HEK293 (cell line): ENCODE measurements at regions of chr4 and their contacts with region 1.

Region 1: DNA sequence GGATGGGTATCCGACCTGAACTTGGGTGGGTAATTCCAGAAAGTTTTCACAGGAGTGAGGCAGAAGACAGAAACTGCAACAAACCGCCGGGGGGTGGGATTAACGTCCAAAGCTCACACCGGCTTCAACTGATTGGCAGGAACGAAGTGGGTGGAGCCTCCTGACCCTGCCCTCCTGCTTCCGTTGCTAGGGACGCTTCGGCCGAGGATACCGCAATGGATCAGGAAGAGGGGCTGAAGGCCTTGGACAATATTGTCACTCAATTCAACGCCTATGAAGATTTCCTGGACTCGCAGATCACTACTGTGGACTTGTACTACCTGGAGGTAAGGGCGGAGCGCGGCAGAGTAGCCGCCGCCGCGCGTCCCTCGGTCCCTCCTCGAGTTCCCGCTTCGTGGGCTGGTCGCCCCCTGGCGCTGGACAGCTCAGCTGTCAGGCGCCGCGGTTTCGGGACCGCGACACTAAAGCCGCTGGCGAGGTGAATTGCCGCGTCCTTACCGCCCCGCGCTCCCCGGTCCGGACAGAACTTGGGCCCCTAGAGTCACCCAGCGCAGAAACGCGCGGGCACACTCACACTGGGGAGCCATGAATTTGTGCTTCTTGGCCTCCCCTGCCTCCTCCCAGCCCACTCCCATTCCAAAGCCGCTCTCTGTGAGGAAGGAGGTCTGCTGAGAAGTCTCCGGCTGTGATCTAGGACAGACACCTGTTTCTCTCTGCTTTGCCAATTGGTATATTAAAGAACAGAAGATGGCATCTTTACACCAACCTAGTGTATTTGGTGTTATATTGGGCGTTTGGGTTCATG is at the start of gene CFAP299:
- H3K4me3 ChIP-seq: peak within 1 kb of the TSS; percentile 61
- H3K27ac ChIP-seq: no peak within 1 kb of the TSS
- H3K4me1 ChIP-seq: no peaks in the 10 kb centered on the region
- CTCF ChIP-seq: peak; percentile 88

Region 2: DNA sequence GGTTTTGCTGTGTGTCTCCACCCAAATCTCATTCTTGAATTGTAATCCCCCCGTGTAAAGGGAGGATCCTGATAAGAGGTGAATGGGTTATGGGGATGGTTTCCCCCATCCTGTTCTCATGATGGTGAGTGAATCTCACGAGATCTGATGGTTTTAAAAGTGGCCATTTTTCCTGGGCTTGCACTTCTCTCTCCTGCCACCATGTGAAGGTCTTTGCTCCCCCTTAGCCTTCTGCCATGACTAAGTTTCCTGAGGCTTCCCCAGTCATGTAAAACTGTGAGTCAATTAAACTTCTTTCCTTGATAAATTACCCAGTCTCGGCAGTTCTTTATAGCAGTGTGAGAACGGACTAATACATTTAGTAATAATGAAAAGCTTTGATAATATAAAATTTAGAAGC is 309.7 kb before region 1 on chr4:
- CTCF ChIA-PET with region 1: no interaction called
- POLR2A ChIA-PET with region 1: no interaction called
- H3K4me3 ChIP-seq: no peak overlapping the region
- H3K27ac ChIP-seq: no peak overlapping the region
- H3K4me1 ChIP-seq: no peaks in the 10 kb centered on the region
- CTCF ChIP-seq: no peak

Region 3: DNA sequence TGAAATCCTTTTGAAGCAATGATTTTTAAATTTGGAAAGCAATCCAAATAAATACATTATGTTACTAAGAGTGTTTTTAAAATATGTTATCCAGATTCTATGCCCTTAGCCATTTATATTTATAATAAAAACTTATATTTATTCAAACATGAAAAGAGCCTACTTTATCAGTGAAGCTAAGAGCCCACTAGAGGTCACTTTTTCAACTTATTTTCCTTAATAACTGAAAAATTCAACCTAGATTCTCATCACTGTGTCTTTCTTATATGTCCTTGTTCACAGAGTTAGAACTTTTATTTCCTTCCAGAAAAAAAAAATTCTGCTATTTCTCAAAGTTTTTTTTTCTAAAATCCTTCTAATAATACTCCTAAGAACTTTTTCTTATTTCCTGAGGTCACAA is 114.6 kb before region 1 on chr4:
- CTCF ChIA-PET with region 1: interaction called, 10 read pairs
- POLR2A ChIA-PET with region 1: no interaction called
- H3K4me3 ChIP-seq: no peak overlapping the region
- H3K27ac ChIP-seq: no peak overlapping the region
- H3K4me1 ChIP-seq: no peaks in the 10 kb centered on the region
- CTCF ChIP-seq: no peak

Region 4: DNA sequence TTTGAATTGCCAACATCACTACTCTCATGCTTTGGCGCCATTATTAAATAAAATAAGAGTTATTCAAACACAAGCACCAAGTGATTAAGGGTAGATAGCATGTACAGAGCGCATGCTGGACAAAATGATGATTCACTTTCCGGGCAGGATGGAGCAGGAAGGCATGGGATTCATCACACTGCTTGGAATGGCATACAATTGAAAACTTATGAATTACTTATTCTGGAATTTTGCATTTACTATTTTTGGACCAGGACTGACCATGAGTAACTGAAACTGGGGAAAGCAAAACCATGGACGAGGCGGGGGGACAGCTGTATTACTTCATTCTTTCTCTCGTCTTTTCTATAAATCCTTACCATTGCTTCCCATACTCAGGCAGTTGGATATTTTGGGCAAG is 97.8 kb before region 1 on chr4:
- CTCF ChIA-PET with region 1: no interaction called
- POLR2A ChIA-PET with region 1: no interaction called
- H3K4me3 ChIP-seq: no peak overlapping the region
- H3K27ac ChIP-seq: no peak overlapping the region
- H3K4me1 ChIP-seq: no peaks in the 10 kb centered on the region
- CTCF ChIP-seq: no peak